ENCODE measurements at regions of chr4 and their contacts with region 1.

Region 1: GRCh38 chr4:122700178-122700725 is 32.3 kb upstream of the BBS12 start:
- DNase-seq: peak; percentile 92
- H3K4me3 ChIP-seq: peak overlapping the region; percentile 56 to 76 (median 63)
- H3K27ac ChIP-seq: peak overlapping the region; percentile 51
- H3K4me1 ChIP-seq: peaks cover 38% of the 10 kb centered on the region
- H3K27me3 ChIP-seq: no peaks in the 10 kb centered on the region
- CTCF ChIP-seq: no peak

Region 2: DNA sequence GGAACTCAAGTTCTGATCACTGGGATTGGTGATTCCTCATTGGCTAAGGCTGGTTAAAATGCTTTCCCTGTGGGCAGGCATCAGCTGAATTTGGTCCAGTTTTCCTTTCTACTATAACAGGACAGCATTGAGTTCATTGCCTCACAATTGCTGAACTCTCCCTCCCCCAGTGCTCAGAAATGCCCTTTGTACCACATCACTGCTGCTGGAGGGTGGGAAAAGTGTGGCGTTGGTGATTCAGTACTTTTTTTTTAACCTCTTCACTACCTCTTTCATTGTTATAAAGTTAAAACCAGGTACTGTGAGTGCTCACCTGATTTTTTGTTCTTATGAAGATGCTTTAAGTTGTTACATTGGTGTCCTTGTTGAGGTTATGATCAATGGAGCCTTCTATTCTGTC is 174.4 kb before region 1 on chr4:
- CTCF ChIA-PET with region 1: no interaction called
- dilution Hi-C with region 1: no loop called
- in situ Hi-C with region 1: no loop called
- intact Hi-C with region 1: no loop called
- DNase-seq: no peak
- H3K4me3 ChIP-seq: no peak overlapping the region
- H3K27ac ChIP-seq: no peak overlapping the region
- H3K4me1 ChIP-seq: no peaks in the 10 kb centered on the region
- H3K27me3 ChIP-seq: no peaks in the 10 kb centered on the region
- CTCF ChIP-seq: no peak

Region 3: DNA sequence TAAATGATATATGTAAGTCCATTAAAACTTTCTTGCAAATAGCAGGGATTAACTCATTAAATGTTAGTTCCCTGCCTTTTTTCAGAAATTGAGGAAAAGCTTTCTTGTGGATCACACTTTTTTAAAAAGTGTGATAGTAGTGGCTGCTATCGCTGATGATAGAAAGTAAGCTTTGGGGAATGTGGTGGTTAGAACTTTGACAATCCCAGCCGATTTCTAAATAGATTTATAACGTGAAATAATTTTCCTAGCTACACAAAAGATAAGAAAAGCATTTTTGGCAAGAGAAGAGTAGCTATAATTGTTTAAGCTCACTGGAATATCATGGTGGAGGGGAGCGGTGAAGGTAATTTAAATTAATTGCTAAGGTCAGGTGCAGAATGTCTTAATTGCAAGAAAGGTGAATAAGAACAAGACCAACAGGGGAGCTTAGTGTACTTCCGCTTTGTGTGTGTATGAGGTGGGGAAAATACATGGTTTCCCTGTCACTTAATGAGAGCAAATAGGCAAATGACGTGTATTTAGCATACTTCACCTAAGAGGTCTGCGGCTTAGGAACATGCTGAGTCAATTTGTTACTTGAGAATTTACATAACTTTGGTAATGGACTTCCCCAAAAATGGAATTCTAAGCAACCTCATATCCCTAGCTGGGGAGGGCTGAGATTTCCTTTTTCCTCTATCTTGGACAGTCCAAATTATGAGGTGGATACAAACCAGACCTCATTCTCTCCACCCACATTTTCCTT is 67.7 kb before region 1 on chr4:
- CTCF ChIA-PET with region 1: no interaction called
- dilution Hi-C with region 1: no loop called
- in situ Hi-C with region 1: no loop called
- intact Hi-C with region 1: no loop called
- DNase-seq: no peak
- H3K4me3 ChIP-seq: no peak overlapping the region
- H3K27ac ChIP-seq: no peak overlapping the region
- H3K4me1 ChIP-seq: no peaks in the 10 kb centered on the region
- H3K27me3 ChIP-seq: no peaks in the 10 kb centered on the region
- CTCF ChIP-seq: no peak

Region 4: GRCh38 chr4:122666527-122667245 is 33.6 kb before region 1 on chr4:
- CTCF ChIA-PET with region 1: no interaction called
- dilution Hi-C with region 1: no loop called
- in situ Hi-C with region 1: no loop called
- intact Hi-C with region 1: loop called (anchors 2 kb)
- DNase-seq: peak; percentile 85
- H3K4me3 ChIP-seq: peak overlapping the region in 1 of 3 experiments; percentile 12
- H3K27ac ChIP-seq: peak overlapping the region; percentile 81
- H3K4me1 ChIP-seq: peaks cover 49% of the 10 kb centered on the region
- H3K27me3 ChIP-seq: no peaks in the 10 kb centered on the region
- CTCF ChIP-seq: no peak

Region 5: GRCh38 chr4:123170843-123171242 is 470.6 kb after region 1 on chr4:
- CTCF ChIA-PET with region 1: no interaction called
- dilution Hi-C with region 1: no loop called
- in situ Hi-C with region 1: no loop called
- intact Hi-C with region 1: no loop called
- DNase-seq: peak; percentile 28
- H3K4me3 ChIP-seq: no peak overlapping the region
- H3K27ac ChIP-seq: no peak overlapping the region
- H3K4me1 ChIP-seq: no peaks in the 10 kb centered on the region
- H3K27me3 ChIP-seq: no peaks in the 10 kb centered on the region
- CTCF ChIP-seq: no peak